Posterior cingulate gyrus (tissue), 11 donors: ENCODE measurements at regions of chr11 and their contacts with region 1.

Region 1: GRCh38 chr11:130427581-130428315 is 661 bp downstream of the ADAMTS8 start:
- DNase-seq: peak in 6 of 10 donors; percentile 62 to 95 (median 80)

Region 2: DNA sequence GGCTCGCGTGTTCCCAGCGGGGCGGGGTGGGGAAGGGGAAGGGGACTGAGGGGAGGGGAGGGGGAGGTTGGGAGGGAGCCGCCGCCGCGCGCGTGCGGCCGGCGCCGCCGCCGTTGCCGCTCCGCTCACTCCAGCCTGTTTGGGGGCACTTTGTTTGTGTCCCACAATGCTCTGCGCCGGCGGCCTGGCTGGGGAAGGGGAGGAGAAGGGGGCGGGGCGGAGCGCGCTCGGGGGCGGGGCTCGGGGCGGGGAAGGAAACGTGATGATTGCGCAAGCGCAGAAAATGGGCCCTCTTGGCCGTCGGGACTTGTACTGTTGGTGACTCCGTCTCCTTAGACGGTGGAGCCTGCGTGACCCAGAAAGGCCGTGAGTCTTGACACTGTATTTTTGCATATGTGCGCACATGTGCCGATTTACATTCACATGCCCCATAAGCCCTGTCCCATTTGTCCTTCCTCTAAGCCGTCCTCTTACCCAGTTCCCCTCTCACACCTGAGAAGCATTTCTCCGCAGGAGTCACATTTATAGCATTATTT is 112.9 kb before region 1 on chr11 and contains the start of gene ZBTB44:
- intact Hi-C with region 1: loop called (anchors 2 kb)
- DNase-seq: peak; percentile 89 to 99 (median 94)

Region 3: DNA sequence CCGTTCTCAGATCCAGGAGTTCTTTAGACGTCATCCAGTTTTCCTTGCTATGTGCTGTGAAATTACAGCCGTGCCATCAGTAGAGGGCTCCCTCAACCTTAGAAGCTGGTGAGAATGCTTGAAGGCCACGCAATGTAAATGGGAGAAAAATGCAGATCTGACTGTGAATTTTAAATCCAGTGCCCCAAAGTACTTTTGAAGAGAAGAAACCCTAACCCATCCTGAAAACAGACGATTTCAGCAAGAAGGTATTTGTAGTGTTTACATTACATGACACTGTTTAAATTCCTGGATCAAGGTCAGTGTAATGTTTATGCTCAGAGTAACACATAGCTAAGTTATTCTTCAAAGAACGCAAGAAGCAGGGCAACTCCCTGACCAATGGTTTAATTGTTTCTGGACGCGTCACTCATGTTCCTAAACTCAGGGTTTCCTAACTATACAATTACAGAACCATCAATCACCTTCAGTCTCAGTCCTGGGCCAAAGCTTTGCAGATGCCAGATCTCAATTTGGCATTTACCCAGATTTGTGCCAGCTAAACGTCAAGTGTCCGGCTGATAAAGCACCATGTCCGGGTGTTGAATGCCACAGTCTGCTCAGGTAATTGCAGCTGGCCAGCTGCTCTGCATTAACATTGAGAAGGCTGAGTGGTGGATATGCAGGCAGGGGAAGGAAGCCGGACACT is 37.5 kb before region 1 on chr11:
- intact Hi-C with region 1: loop called (anchors 2 kb)
- DNase-seq: peak in 6 of 10 donors; percentile 42 to 90 (median 56)

Region 4: DNA sequence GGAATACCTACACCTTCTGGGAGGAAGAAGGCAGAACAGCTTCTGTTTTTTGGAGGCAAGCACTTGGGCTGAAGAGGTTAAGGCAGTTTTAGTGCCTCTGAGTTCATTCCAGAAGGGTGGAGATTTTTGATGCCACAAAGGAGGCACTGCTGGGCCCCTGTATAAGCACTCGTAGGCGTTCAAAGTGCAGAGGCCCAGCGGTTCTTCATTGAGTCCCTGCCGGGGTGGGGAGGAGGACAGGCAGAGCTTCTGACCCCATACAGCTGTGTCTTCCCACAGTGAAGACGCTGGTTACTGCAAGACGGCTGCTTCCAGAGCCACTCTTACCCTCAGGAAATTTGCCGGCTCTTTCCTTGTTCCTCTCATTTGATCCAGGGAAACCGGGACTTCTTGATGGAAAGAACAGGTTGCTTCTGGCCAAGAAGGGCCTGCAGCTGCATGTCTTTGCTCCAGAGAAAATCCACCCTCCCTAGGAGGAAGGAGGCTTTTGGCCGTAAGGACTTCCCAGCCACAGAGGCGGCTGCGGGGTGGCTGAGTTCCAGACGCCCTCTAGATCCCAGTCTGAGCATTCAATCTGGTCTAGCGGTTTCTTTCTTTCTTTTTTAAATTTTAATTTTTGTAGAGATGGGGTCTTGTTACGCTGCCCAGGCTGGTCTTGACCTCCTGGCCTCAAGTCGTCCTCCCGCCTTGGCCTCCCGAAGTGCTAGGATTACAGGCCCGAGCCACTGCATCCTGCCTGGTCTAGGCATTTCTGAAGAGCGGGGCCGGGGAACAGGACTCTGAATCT is 30.1 kb after region 1 on chr11:
- intact Hi-C with region 1: no loop called
- DNase-seq: peak in 1 of 10 donors; percentile 85